Panc1 (cell line): ENCODE measurements at regions of chrX and their contacts with region 1.

Region 1: DNA sequence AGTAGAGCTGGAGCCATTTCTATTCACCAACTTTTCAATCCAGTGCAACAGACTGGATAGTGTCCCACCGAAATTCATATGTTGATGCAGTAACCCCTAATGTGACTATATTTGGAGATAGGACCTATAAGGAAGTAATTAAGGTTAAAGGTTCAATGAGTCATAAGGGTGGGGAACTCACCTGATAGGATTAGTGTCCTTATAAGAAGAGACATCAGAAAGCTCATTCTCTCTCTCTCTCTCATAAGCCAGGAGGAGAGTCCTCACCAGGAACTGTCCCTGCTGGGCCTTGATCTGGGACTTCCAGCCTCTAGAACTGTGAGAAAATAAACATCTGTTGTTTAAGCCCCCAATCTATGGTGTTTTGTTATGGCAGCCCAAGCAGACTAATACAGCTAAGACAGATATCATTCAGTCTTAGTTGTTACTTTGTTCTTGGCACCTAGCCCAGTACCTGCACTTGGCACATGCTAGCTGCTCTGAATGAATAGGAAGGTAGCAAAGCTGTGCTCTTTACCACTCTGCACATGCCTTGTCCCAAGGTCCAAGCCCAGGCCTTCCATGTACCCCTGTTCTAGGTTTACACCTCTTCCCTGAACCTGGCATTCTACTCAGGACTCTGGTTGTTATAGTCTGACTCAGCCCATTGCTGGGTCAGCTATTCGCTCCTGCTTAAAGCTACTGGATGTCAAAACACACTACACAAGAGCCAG is 19.2 kb upstream of the BRS3 start:
- DNase-seq: no peak
- ATAC-seq: no peak
- H3K4me3 ChIP-seq: no peak overlapping the region
- H3K27ac ChIP-seq: no peak overlapping the region
- H3K4me1 ChIP-seq: no peaks in the 10 kb centered on the region
- H3K27me3 ChIP-seq: 0 out of 2 replicates have a peak, but pooled peaks cover 2% of the 10 kb centered on the region
- CTCF ChIP-seq: no peak

Region 2: DNA sequence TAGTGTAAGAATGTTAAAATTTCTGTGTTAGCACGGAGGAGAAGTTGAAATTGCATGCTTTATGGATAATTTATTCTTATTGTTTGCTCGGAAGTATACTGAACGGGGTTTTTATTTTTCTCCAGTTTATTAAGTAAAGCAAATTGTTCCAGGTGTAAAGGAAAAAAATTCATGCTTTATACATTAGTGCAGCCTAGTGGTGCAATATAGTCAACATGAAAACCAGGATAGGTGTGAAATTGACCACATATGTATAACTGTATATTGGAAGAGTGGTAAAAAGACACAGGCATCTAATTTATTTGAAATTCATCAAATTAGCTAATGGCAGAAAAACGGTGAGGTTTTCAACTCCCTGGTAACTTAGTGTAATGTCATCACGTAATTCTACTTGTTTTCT is 20.2 kb after region 1 on chrX:
- CTCF ChIA-PET with region 1: interaction called, 14 read pairs
- POLR2A ChIA-PET with region 1: no interaction called
- in situ Hi-C with region 1: no loop called
- intact Hi-C with region 1: no loop called
- DNase-seq: no peak
- ATAC-seq: no peak
- H3K4me3 ChIP-seq: no peak overlapping the region
- H3K27ac ChIP-seq: no peak overlapping the region
- H3K4me1 ChIP-seq: no peaks in the 10 kb centered on the region
- H3K27me3 ChIP-seq: peaks cover 38% of the 10 kb centered on the region
- CTCF ChIP-seq: peak; percentile 19; the same call in 1 of the 2 replicates

Region 3: GRCh38 chrX:136639506-136640176 is 171.1 kb after region 1 on chrX:
- CTCF ChIA-PET with region 1: no interaction called
- POLR2A ChIA-PET with region 1: no interaction called
- in situ Hi-C with region 1: no loop called
- intact Hi-C with region 1: no loop called
- DNase-seq: no peak
- ATAC-seq: no peak
- H3K4me3 ChIP-seq: no peak overlapping the region
- H3K27ac ChIP-seq: no peak overlapping the region
- H3K4me1 ChIP-seq: no peaks in the 10 kb centered on the region
- H3K27me3 ChIP-seq: peaks cover 5% of the 10 kb centered on the region
- CTCF ChIP-seq: no peak

Region 4: GRCh38 chrX:136816970-136817369 is 348.4 kb after region 1 on chrX:
- CTCF ChIA-PET with region 1: no interaction called
- POLR2A ChIA-PET with region 1: no interaction called
- in situ Hi-C with region 1: no loop called
- intact Hi-C with region 1: no loop called
- DNase-seq: peak; percentile 17
- ATAC-seq: peak; percentile 45; the same call in 1 of the 2 replicates
- H3K4me3 ChIP-seq: no peak overlapping the region
- H3K27ac ChIP-seq: no peak overlapping the region; the same call in 1 of the 2 replicates
- H3K4me1 ChIP-seq: no peaks in the 10 kb centered on the region
- H3K27me3 ChIP-seq: no peaks in the 10 kb centered on the region
- CTCF ChIP-seq: no peak